ENCODE measurements at regions of chr15 and their contacts with region 1.

Region 1: DNA sequence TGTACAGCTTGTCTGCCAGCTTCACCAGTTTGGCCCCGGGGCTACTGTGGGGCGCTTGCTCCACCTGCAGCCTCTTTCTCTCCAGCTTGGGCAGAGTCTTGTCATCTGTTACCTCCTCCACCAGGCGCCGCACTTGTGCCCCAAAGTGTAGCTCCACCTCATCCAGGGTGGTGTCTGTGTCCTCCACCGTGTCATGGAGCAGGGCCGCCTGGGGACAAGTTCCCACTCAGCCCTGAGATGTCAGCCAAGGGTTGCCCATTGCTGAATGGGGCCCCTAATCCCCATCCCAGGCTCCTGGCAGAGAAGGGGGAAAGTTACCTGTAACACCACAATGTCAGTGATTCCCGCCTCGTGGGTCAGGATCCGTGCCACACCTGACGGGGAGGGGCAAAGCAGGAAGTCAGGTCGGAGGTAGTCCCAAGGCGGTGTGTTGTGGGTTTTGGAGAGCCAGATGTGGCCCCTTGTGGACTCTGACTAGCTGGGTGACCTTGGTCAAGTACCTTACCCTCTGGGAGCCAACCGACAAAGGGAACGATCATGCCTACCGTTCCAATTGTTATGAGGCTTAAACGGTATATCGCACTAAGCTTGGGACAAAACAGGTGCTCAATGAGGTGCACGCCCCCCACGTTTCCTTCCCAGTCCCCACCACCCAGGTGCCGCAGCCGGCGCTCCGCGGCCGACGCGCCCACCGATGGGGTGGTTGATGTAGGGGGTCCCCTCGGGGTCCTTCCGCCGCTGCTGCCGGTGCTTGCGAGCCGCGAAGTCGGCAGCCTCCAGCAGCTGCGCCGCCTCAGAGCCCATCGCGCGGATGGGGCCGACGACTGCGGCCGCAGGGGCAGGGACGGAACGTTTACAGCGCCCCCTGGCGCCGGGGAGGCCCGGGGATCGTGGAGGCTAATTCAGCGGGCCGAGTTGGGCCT is at the start of gene HDDC3:
- DNase-seq: peak; percentile 81 to 91 (median 86)
- H3K4me3 ChIP-seq: peak within 1 kb of the TSS; percentile 99
- H3K4me3 Mint-ChIP-seq: peak within 1 kb of the TSS; percentile 88 to 99 (median 98)
- H3K27ac ChIP-seq: peak within 1 kb of the TSS; percentile 93
- H3K27ac Mint-ChIP-seq: peak within 1 kb of the TSS; percentile 95 to 99 (median 98)
- H3K4me1 ChIP-seq: peaks cover 60% of the 10 kb centered on the region
- H3K4me1 Mint-ChIP-seq: peaks cover 46 to 61% (median 53%) of the 10 kb centered on the region in 3 donors
- H3K27me3 ChIP-seq: no peaks in the 10 kb centered on the region
- H3K27me3 Mint-ChIP-seq: no peaks in the 10 kb centered on the region
- total RNA-seq, gene HDDC3: 39.5 to 43.5 TPM

Region 2: DNA sequence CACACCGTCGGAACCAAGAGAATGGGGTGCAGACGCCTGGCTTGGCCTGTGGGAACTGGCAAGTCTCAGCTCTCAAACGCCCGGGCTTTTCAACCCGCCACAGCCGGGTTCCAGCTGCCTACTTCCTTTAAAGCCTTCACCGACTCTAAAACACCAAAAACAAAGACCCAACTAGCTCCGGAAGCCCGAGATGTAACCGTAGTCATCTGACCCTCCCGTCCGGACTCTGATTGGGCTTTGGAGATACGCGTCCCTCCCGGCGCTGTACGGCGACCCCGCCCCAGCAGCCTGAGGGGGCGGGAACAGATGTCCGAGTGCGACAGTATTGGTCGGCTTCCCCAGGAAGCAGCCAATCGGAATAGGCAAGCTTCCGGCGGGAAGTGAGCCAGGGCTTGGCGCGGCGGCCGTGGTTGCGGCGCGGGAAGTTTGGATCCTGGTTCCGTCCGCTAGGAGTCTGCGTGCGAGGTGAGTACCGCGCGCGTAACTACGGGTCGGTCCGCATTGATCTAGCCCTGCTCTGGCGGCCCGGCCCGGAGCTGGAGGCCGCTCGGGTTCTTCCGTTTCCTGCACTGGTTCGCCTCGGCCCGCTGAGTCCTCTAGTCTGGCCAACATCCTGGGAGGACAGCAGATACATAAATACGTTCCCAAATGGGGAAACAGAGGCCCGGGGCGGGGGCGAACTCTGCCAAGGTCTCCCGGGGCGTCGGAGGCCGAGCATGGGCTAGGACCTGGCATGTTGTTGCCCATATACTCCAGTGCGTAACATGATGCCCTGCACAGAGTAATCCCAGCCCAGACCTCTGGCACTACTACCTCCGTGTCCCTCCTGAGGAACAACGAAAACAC is 214.8 kb before region 1 on chr15 and contains the start of gene BLM:
- CTCF ChIA-PET with region 1: interaction called, 15 read pairs
- POLR2A ChIA-PET with region 1: interaction called, 7 read pairs
- DNase-seq: peak; percentile 91 to 97 (median 96)
- H3K4me3 ChIP-seq: peak within 1 kb of the TSS; percentile 98
- H3K4me3 Mint-ChIP-seq: peak within 1 kb of the TSS; percentile 88 to 100 (median 97)
- H3K27ac ChIP-seq: peak within 1 kb of the TSS; percentile 89
- H3K27ac Mint-ChIP-seq: peak within 1 kb of the TSS; percentile 53 to 98 (median 94)
- H3K4me1 ChIP-seq: peaks cover 21% of the 10 kb centered on the region
- H3K4me1 Mint-ChIP-seq: peaks cover 31 to 33% (median 32%) of the 10 kb centered on the region in 3 donors
- H3K27me3 ChIP-seq: no peaks in the 10 kb centered on the region
- H3K27me3 Mint-ChIP-seq: peaks cover 0 to 2% of the 10 kb centered on the region in 2 donors
- total RNA-seq, gene BLM: 37.0 to 37.6 TPM

Region 3: GRCh38 chr15:90902040-90902839 is 29.8 kb before region 1 on chr15:
- CTCF ChIA-PET with region 1: interaction called, 251 read pairs
- POLR2A ChIA-PET with region 1: interaction called, 63 read pairs
- DNase-seq: peak; percentile 59 to 81 (median 74)
- H3K4me3 ChIP-seq: peak overlapping the region; percentile 87
- H3K4me3 Mint-ChIP-seq: peak overlapping the region; percentile 86 to 93 (median 91)
- H3K27ac ChIP-seq: peak overlapping the region; percentile 84
- H3K27ac Mint-ChIP-seq: peak overlapping the region; percentile 87 to 96 (median 92)
- H3K4me1 ChIP-seq: peaks cover 20% of the 10 kb centered on the region
- H3K4me1 Mint-ChIP-seq: peaks cover 21 to 37% (median 21%) of the 10 kb centered on the region in 3 donors
- H3K27me3 ChIP-seq: no peaks in the 10 kb centered on the region
- H3K27me3 Mint-ChIP-seq: no peaks in the 10 kb centered on the region

Region 4: DNA sequence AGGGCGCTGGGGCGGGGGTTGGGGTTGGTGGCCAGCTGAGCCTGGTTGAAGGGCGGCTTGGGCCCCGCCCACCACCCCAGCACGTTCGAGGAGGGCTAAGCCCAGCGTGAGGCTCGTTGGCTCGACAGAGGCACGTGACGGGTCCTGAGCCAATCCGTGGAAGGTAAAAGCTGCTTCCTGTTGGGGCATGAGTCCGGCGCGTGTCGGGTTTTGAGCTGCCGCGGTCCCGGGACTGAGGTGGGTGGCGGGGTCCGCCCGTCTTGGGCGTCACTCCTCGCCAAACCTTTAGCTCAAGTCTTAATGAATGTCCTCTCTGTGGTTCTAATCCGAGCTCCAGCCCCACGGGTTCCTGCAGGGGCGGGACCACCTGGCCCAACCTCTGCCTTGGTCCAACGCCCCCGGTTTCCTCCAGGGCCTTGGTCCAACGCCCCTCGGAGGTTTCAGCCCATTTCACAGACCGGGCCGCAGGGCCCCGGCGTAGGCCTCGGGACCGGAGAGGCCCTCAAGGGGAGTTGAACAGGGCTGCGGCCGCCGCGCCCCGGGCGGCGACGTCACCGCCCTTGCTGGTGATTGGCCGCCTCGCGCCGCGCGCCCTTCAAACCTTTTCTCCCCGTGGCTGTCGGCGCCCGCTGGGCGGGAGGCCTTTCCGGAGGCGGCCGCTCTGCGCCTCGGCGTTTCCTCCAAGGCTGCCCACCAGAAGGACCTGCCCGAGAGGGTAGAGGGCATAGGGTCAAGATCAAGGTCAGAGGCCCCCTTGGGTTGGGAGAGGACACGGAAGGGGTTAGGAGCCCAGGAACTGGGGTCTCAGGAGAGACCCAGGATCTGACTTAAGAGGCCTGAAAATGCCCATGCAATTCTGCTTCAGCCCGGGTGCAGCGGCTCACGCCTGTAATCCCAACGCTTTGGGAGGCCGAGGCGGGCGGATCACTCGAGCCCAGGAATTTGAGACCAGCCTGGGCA is 23.0 kb after region 1 on chr15 and contains the start of gene RCCD1:
- CTCF ChIA-PET with region 1: interaction called, 158 read pairs
- POLR2A ChIA-PET with region 1: interaction called, 17 read pairs
- DNase-seq: peak; percentile 82 to 92 (median 84)
- H3K4me3 ChIP-seq: peak within 1 kb of the TSS; percentile 64
- H3K4me3 Mint-ChIP-seq: peak within 1 kb of the TSS; percentile 86 to 95 (median 88)
- H3K27ac ChIP-seq: peak within 1 kb of the TSS; percentile 89
- H3K27ac Mint-ChIP-seq: peak within 1 kb of the TSS; percentile 87 to 97 (median 92)
- H3K4me1 ChIP-seq: peaks cover 14% of the 10 kb centered on the region
- H3K4me1 Mint-ChIP-seq: peaks cover 5 to 27% (median 14%) of the 10 kb centered on the region in 3 donors
- H3K27me3 ChIP-seq: no peaks in the 10 kb centered on the region
- H3K27me3 Mint-ChIP-seq: no peaks in the 10 kb centered on the region
- total RNA-seq, gene RCCD1: 20.9 to 21.7 TPM

Region 5: GRCh38 chr15:91032919-91033803 is 101.2 kb after region 1 on chr15:
- CTCF ChIA-PET with region 1: interaction called, 12 read pairs
- POLR2A ChIA-PET with region 1: no interaction called
- DNase-seq: peak; percentile 25 to 69 (median 38)
- H3K4me3 ChIP-seq: no peak overlapping the region
- H3K4me3 Mint-ChIP-seq: peak overlapping the region in 1 of 7 donors; percentile 27
- H3K27ac ChIP-seq: no peak overlapping the region
- H3K27ac Mint-ChIP-seq: peak overlapping the region in 2 of 8 donors; percentile 3 to 42
- H3K4me1 ChIP-seq: no peaks in the 10 kb centered on the region
- H3K4me1 Mint-ChIP-seq: peaks cover 0 to 8% (median 7%) of the 10 kb centered on the region in 3 donors
- H3K27me3 ChIP-seq: no peaks in the 10 kb centered on the region
- H3K27me3 Mint-ChIP-seq: peaks cover 0 to 3% of the 10 kb centered on the region in 2 donors